ENCODE measurements at regions of chr9 and their contacts with region 1.

Region 1: DNA sequence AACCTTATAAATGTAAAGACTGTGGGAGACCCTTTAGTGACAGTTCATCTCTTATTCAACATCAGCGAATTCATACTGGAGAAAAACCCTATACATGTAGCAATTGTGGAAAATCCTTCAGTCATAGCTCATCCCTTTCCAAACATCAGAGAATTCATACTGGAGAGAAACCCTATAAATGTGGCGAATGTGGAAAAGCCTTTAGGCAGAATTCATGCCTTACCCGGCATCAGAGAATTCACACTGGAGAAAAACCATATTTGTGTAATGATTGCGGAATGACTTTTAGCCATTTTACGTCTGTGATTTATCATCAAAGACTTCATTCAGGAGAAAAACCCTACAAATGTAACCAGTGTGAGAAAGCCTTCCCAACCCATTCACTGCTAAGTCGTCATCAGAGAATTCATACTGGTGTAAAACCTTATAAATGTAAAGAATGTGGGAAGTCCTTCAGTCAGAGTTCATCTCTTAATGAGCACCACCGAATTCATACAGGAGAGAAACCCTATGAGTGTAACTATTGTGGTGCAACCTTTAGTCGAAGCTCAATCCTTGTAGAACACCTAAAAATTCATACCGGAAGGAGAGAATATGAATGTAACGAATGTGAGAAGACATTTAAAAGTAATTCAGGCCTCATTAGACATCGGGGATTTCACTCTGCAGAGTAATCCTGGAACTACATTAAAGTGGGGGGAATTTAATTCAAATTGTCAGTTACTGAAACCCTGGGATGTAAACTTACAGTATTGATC is 17.7 kb downstream of the ZNF483 start:
- DNase-seq: no peak
- ATAC-seq: no peak
- H3K4me3 ChIP-seq: no peak overlapping the region
- H3K27ac ChIP-seq: no peak overlapping the region
- H3K4me1 ChIP-seq: no peaks in the 10 kb centered on the region
- H3K27me3 ChIP-seq: no peaks in the 10 kb centered on the region
- CTCF ChIP-seq: no peak

Region 2: GRCh38 chr9:111037381-111038305 is 505.0 kb before region 1 on chr9:
- CTCF ChIA-PET with region 1: no interaction called
- POLR2A ChIA-PET with region 1: no interaction called
- intact Hi-C with region 1: no loop called
- DNase-seq: peak; percentile 42
- ATAC-seq: peak; percentile 39
- H3K4me3 ChIP-seq: peak overlapping the region; percentile 83
- H3K27ac ChIP-seq: peak overlapping the region; percentile 66
- H3K4me1 ChIP-seq: peaks cover 37% of the 10 kb centered on the region
- H3K27me3 ChIP-seq: no peaks in the 10 kb centered on the region
- CTCF ChIP-seq: no peak

Region 3: DNA sequence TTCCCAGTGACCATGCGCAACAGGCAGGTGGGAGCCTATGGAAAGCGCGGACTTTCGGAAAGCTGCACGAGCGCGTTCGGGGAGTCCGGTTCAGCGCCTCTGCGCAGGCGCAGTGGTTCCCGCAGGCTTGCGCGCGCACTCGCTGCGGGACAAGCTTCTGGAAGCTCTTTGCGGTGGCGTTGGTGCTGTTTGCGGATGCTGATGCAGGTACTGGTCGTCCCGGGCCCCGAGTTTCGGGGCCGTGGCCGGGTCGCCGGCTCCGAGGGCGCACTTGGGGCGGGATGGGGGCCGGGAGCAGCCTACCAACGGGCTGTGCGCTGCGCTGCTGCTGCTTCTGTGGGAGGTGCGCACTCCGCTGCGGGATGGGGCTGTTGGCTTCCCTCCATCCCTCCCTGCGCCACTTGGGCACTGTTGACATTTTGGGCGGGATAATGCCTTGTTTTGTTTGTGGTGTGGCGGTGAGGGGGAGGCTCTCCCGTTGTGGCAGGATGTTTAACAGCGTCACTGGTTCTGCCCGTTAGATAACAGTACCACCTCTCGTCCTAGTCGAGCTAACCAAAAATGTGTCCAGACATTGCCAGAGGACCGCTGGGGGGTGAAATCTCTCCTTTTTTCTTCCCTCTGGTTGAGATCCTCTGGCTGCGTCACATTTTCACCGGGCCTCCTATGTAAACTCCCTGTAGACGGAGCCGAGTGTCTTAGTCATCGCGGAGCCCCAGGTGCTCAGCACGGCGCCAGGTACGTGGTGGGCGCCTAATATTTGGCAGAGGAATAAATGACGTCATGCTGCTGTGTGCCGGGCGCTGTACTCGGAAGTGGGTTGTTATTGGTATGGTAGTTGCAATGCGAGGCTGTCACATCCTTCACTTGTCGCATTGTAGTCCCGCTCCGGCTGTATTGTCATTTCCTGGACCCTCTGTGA is 17.4 kb before region 1 on chr9 and contains the start of gene ZNF483:
- CTCF ChIA-PET with region 1: no interaction called
- POLR2A ChIA-PET with region 1: interaction called, 15 read pairs
- intact Hi-C with region 1: no loop called
- DNase-seq: peak; percentile 83
- ATAC-seq: peak; percentile 86
- H3K4me3 ChIP-seq: peak within 1 kb of the TSS; percentile 74
- H3K27ac ChIP-seq: peak within 1 kb of the TSS; percentile 20
- H3K4me1 ChIP-seq: peaks cover 7% of the 10 kb centered on the region; the same call in 1 of the 2 replicates
- H3K27me3 ChIP-seq: no peaks in the 10 kb centered on the region
- CTCF ChIP-seq: no peak
- total RNA-seq, gene ZNF483: 3.0 and 3.9 TPM in 2 replicates